Endothelial cell of umbilical vein (primary cell): ENCODE measurements at regions of chr13 and their contacts with region 1.

Region 1: GRCh38 chr13:108915634-108916512 is 286.5 kb downstream of the MYO16 start:
- DNase-seq: peak; percentile 97
- H3K4me3 ChIP-seq: peak overlapping the region in 1 of 3 experiments; percentile 31
- H3K27ac ChIP-seq: peak overlapping the region; percentile 80
- H3K4me1 ChIP-seq: peaks cover 25% of the 10 kb centered on the region
- H3K27me3 ChIP-seq: no peaks in the 10 kb centered on the region
- CTCF ChIP-seq: no peak
- POLR2A ChIP-seq: no peak

Region 2: DNA sequence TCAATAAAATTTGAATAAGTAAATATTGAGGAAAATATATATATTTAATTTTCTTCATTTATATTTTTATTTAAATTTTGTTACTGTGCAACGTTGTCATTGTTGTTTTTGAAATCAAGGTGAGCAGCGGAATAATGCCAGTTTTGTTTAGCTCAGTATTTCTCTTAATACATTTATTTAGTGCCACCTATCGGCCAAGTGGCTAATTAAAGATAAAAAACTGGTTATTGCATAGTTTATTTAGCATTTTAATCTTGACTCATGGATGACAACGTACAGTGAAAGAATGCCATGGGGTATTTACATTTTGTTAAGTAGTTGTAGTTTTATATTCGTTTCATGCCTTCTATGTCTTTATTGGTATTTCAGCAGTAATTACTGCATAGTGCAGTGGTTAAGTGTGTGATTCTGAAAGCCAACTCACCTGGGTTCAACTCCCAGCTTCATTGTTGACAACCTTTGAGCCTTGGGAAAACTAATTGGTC is 20.6 kb before region 1 on chr13:
- CTCF ChIA-PET with region 1: interaction called, 37 read pairs
- POLR2A ChIA-PET with region 1: interaction called, 3 read pairs
- dilution Hi-C with region 1: no loop called
- intact Hi-C with region 1: no loop called
- DNase-seq: peak; percentile 47
- H3K4me3 ChIP-seq: no peak overlapping the region
- H3K27ac ChIP-seq: no peak overlapping the region
- H3K4me1 ChIP-seq: peaks cover 8% of the 10 kb centered on the region
- H3K27me3 ChIP-seq: peaks cover 0 to 4% of the 10 kb centered on the region in 2 experiments
- CTCF ChIP-seq: peak; percentile 23 to 28
- POLR2A ChIP-seq: no peak

Region 3: DNA sequence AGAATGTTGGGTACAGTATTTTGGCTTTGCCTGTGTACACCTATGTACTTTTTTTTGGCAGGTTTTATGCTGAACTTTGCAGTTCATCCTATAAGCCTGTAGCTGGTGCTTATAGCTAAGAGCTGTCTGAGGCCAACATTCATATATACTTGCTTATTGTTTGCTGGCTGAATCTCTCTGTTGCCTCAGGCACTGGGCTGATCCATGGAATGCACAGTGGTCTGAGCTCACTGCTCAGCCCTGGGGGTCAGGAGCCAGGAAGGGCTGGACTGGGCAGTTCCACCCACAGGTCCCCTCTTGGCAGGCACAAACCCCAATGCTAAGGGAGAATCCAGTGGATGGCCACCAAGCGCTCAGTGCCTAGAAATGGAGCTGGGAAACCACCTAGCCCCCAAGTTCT is 22.3 kb after region 1 on chr13:
- CTCF ChIA-PET with region 1: interaction called, 13 read pairs
- POLR2A ChIA-PET with region 1: no interaction called
- dilution Hi-C with region 1: no loop called
- intact Hi-C with region 1: no loop called
- DNase-seq: no peak
- H3K4me3 ChIP-seq: no peak overlapping the region
- H3K27ac ChIP-seq: no peak overlapping the region
- H3K4me1 ChIP-seq: no peaks in the 10 kb centered on the region
- H3K27me3 ChIP-seq: no peaks in the 10 kb centered on the region
- CTCF ChIP-seq: no peak
- POLR2A ChIP-seq: no peak

Region 4: GRCh38 chr13:108961542-108962125 is 45.8 kb after region 1 on chr13:
- CTCF ChIA-PET with region 1: interaction called, 46 read pairs
- POLR2A ChIA-PET with region 1: no interaction called
- dilution Hi-C with region 1: no loop called
- intact Hi-C with region 1: loop called (anchors 1 kb)
- DNase-seq: peak; percentile 60
- H3K4me3 ChIP-seq: no peak overlapping the region
- H3K27ac ChIP-seq: no peak overlapping the region
- H3K4me1 ChIP-seq: peaks cover 8% of the 10 kb centered on the region
- H3K27me3 ChIP-seq: no peaks in the 10 kb centered on the region
- CTCF ChIP-seq: peak; percentile 49 to 67
- POLR2A ChIP-seq: no peak

Region 5: GRCh38 chr13:109156181-109156935 is 240.5 kb after region 1 on chr13:
- CTCF ChIA-PET with region 1: interaction called, 3 read pairs
- POLR2A ChIA-PET with region 1: interaction called, 5 read pairs
- dilution Hi-C with region 1: no loop called
- intact Hi-C with region 1: loop called (anchors 2 kb)
- DNase-seq: peak; percentile 91
- H3K4me3 ChIP-seq: no peak overlapping the region
- H3K27ac ChIP-seq: peak overlapping the region; percentile 87
- H3K4me1 ChIP-seq: peaks cover 39% of the 10 kb centered on the region
- H3K27me3 ChIP-seq: no peaks in the 10 kb centered on the region
- CTCF ChIP-seq: no peak
- POLR2A ChIP-seq: no peak

Region 6: DNA sequence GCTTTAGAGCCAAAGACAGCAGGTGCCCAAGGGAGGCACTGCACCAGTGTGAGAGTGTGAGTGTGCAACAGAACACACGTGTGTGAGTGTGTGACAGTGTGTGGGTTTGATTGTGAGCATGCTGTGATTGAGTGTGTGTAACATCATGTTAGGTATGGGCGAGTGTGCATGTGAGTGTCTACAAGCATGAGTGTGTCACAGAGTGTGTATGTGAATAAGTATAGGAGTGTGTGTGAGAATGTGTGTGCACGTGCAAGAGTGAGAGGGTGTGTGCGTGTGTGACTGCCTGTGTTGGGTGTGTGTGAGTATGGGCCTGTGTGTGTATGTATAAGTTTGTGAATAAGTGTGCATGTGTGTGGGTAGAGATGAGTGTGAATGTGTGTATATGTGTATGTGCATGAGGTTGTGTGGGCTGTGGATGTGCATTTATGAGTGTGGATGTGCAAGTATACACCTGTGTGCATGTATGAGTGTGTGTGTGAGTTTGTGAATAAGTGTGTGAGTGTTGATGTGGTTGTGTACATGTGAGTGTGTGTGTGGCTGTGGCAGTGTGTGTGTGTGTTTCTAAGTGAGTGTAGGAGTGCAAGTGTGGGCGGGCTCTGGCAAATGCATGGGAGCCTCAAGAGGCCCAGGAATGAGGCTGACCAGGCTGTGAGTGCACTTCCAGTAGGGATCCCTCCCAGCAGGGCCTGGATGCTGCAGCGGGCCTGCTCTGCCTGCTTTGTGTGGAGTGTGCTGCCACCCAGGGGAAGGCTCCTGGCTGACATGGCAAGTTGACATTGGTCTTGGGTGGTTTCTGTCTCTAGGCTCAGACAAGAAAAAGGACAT is 1192.7 kb after region 1 on chr13:
- CTCF ChIA-PET with region 1: interaction called, 8 read pairs
- POLR2A ChIA-PET with region 1: no interaction called
- dilution Hi-C with region 1: no loop called
- intact Hi-C with region 1: loop called (anchors 1 kb)
- DNase-seq: peak; percentile 46
- H3K4me3 ChIP-seq: no peak overlapping the region
- H3K27ac ChIP-seq: no peak overlapping the region
- H3K4me1 ChIP-seq: no peaks in the 10 kb centered on the region
- H3K27me3 ChIP-seq: peaks cover 0 to 3% of the 10 kb centered on the region in 2 experiments
- CTCF ChIP-seq: peak; percentile 25 to 68
- POLR2A ChIP-seq: no peak